ENCODE measurements at regions of chr1 and their contacts with region 1.

Region 1: DNA sequence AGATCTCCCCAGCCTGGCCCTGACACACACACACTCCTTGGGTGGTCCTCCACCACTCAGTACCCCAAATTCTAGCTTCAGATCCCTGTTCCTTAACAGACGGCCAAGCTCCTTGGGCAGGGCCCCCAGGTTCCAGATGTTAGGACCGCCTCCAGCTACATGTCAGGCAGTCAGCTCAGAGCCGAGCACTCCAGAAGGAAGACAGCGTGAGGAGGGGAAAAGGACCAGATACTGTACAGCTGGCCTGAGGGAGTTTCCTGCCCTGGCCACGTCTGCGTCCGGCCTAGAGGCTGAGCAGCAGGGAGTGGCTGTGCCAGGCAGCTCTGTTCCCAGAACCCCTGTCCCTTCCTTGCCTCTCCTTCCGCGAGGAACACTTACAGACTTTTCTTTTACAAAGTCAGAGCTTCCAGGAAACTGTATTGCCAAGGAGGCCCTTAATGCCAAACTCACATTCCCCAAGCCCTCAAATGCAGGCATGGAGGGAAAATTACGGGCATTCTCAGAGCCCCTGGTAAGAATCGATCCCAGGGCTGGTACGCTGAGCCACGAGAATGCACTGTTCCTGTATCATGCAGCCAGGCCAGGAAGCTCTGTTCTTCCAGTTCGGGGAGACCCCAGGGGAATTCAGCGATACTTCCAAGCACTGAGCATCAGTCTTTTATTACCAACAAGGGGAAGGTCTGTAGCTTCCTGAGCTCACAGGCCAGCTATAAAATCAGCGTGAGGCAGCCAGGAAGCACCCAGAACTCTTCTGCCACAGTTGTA is 45.2 kb upstream of the CNTN2 start:
- DNase-seq: no peak
- H3K4me3 ChIP-seq: no peak overlapping the region
- H3K4me1 ChIP-seq: no peaks in the 10 kb centered on the region
- H3K27me3 ChIP-seq: peaks cover 11% of the 10 kb centered on the region

Region 2: GRCh38 chr1:204673909-204674649 is 323.7 kb before region 1 on chr1:
- in situ Hi-C with region 1: no loop called
- DNase-seq: no peak
- H3K4me3 ChIP-seq: no peak overlapping the region
- H3K4me1 ChIP-seq: no peaks in the 10 kb centered on the region
- H3K27me3 ChIP-seq: peaks cover 6% of the 10 kb centered on the region

Region 3: DNA sequence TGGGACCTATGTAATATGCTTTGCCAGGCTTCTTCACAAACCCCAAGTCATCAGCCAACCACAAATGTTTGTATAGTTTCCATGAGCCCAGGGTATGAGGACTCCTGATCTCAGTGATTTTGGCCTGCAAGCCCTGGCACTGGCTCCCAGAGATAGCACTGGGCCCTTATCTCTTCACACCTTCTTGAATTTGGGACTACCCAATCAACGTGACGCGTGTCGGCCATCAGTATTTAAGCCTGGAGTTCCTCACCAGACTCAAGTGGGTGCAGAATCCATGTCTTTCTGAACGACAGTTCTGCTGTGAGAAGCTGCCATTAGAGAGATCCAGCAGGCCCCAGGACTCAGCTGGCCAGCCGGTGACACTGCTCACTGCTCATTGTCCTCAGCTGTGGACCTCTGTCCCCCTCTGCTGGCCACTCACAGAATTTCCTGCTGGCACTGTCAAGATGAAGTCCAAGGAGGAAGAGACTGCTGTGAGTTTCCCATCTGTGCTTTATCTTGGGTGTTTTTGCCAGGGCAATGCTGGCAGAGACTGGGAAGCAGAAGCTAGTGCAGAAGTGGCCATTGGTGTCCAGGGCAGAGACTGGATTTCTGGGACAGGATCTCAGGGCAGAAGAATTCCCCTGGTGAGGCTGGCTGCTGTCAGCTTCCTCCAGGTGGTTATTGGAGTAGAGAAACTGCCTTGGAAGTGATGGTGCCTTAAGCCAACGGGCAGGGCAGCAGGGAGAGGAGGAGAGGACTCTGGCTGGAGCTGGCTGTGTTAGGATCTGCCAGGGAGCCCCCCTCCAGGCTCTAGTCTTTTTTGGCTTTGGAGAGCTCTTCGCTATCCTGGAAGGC is 258.4 kb after region 1 on chr1:
- in situ Hi-C with region 1: loop called (anchors 5 kb)
- DNase-seq: peak; percentile 60 to 90
- H3K4me3 ChIP-seq: no peak overlapping the region
- H3K4me1 ChIP-seq: no peaks in the 10 kb centered on the region
- H3K27me3 ChIP-seq: no peaks in the 10 kb centered on the region